Natural killer cell (primary cell): ENCODE measurements at regions of chr2 and their contacts with region 1.

Region 1: DNA sequence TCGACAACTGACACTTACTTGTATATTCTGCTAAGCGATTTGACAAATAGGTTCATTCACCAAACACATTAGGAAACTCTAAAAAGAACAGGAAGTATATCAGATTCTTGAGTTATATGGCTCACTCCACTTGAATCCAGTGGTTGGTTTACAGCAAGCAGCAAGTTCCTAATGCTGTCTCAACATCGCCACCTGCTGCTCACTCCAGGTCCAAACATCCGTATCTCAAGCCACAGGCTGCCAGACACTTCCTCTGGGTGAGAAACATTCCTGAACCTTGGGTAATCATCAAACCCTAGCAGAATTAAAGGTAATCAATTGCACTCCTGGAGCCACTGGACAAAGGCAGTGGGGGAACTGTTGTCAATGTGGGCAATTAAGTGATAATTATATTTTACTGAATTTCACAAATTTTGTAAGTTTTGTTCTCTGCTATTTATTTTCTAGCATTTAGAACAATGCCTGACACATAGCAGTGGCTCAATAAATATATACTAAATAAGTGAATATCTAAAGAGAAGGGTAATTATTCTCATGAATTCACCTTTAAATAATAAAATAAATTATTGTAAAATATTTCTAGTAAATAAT is 107.1 kb upstream of the TTN start:
- DNase-seq: peak; percentile 50 to 81
- ATAC-seq: peak; percentile 81 to 91 (median 84)
- H3K4me3 ChIP-seq: no peak overlapping the region
- H3K4me3 Mint-ChIP-seq: no peak overlapping the region
- H3K27ac ChIP-seq: no peak overlapping the region
- H3K27ac Mint-ChIP-seq: no peak overlapping the region
- H3K4me1 ChIP-seq: no peaks in the 10 kb centered on the region
- H3K4me1 Mint-ChIP-seq: peaks cover 0 to 6% of the 10 kb centered on the region in 2 donors
- H3K27me3 ChIP-seq: no peaks in the 10 kb centered on the region
- H3K27me3 Mint-ChIP-seq: no peaks in the 10 kb centered on the region
- CTCF ChIP-seq: peak; percentile 82

Region 2: GRCh38 chr2:178776751-178777150 is 137.6 kb before region 1 on chr2:
- intact Hi-C with region 1: loop called (anchors 10 kb)
- DNase-seq: no peak
- ATAC-seq: no peak
- H3K4me3 ChIP-seq: no peak overlapping the region
- H3K4me3 Mint-ChIP-seq: no peak overlapping the region
- H3K27ac ChIP-seq: no peak overlapping the region
- H3K27ac Mint-ChIP-seq: no peak overlapping the region
- H3K4me1 ChIP-seq: no peaks in the 10 kb centered on the region
- H3K4me1 Mint-ChIP-seq: no peaks in the 10 kb centered on the region
- H3K27me3 ChIP-seq: no peaks in the 10 kb centered on the region
- H3K27me3 Mint-ChIP-seq: no peaks in the 10 kb centered on the region
- CTCF ChIP-seq: no peak